A673 (cell line): ENCODE measurements at regions of chr13 and their contacts with region 1.

Region 1: DNA sequence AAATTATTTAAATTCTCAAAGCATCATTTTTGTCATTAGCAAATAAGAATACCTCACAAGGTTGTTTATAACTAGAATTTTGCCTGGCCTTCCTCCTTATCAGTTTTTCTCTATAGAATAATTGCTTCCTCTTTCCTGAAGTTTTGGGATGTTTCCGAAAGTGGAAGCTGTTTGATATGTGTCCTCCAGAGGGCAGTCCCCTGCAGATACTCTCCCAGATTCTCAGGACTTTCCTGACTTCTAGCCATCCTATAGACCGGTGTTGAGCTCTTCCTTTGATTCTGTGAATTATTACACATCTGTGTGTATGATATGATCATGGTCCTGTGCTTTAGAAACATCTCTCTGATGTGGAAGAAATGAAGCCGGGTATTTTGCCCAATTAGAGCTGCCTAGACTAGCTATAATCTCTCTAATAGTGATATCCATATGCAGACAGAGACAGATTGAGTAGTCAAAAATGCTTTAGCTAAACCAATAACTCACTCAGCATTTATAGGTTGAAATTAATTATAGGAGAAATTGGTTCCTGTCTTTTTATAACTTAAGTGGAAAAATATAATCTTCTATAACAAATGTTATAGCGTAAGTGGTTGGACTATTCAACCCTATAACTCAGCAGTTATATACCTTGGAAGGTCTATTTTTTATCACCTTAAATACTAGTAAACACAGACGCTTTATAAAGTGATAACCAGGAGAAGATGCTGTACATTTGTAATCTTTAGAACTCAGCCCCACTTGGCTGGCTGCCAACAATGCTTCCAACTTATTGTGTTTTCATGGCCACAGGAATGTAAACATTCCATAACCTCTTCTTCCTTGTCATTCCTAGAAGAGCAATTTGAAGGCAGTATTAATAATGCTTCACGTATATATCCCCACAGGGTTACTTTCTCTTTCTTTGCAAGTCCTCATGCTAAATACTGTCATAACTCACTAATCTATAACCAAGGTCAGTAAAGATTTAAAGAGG is 201.0 kb upstream of the RXFP2 start:
- DNase-seq: peak; percentile 35
- H3K4me3 ChIP-seq: no peak overlapping the region
- H3K27ac ChIP-seq: no peak overlapping the region
- H3K4me1 ChIP-seq: no peaks in the 10 kb centered on the region
- H3K27me3 ChIP-seq: no peaks in the 10 kb centered on the region
- CTCF ChIP-seq: peak; percentile 70

Region 2: DNA sequence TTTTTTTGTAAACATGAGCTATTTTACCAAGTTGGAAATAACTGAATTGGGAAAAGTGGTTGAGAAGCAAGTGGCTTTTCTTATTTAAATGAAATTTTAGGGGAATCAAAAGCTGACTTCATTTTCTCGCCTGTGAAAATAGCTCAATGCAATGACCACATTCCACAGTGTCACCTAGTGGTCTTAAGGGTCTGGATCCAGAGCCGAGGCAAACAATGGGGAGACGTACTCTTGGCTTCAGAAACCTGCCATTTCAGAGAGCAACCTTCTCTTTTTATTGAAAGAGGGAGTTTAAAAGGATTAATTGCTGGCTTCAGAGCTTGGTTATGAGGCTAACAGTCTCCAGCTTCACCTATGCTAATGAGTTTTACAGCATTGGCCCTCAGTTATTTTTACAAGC is 161.3 kb after region 1 on chr13:
- CTCF ChIA-PET with region 1: interaction called, 11 read pairs
- POLR2A ChIA-PET with region 1: no interaction called
- intact Hi-C with region 1: no loop called
- DNase-seq: no peak
- H3K4me3 ChIP-seq: no peak overlapping the region
- H3K27ac ChIP-seq: no peak overlapping the region
- H3K4me1 ChIP-seq: no peaks in the 10 kb centered on the region
- H3K27me3 ChIP-seq: peaks cover 6% of the 10 kb centered on the region
- CTCF ChIP-seq: peak; percentile 26; the same call in 1 of the 2 replicates

Region 3: GRCh38 chr13:31742097-31742734 is 203.9 kb after region 1 on chr13:
- CTCF ChIA-PET with region 1: no interaction called
- POLR2A ChIA-PET with region 1: no interaction called
- intact Hi-C with region 1: loop called (anchors 1 kb)
- DNase-seq: peak; percentile 72
- H3K4me3 ChIP-seq: no peak overlapping the region
- H3K27ac ChIP-seq: no peak overlapping the region
- H3K4me1 ChIP-seq: no peaks in the 10 kb centered on the region
- H3K27me3 ChIP-seq: no peaks in the 10 kb centered on the region
- CTCF ChIP-seq: peak; percentile 95